ENCODE measurements at regions of chrX and their contacts with region 1.

Region 1: DNA sequence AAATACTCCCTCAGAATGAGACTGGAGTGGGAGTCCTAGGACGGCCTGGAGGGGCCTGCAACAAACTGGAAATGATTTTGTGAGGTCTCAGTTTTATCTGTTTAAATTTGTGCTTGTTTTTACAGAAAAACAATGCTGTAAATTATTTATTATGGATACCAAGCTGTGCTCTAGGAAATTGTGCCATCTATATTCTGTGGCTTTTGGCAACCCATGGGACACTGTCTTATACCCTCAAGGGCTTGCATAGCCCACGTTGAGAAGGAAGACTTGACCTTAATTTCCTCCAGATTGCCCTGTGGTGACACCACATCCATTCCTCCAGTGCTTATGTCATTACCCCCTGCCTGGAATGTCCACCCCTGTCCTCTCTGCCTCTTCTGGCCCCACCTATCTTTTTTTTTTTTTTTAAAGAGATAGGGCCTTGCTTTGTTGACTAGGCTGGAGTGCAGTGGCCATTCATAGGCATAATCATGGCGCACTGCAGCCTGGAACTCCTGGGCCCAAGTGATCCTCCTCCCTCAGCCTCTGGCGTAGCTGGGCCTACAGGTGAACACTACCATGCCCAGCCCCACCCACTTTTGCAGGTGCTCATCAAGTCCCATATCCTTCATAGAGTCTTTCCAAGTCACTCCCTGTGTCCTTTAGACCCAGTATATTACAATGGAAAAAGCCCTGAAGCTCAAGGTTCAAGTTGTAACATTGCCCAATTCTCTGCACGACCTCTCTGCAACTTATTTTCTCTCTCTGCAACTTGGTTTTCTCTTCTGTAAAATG is 77.4 kb downstream of the HPRT1 start:
- DNase-seq: no peak
- ATAC-seq: peak; percentile 72
- H3K4me3 ChIP-seq: no peak overlapping the region
- H3K27ac ChIP-seq: peak overlapping the region; percentile 57
- H3K4me1 ChIP-seq: peaks cover 15% of the 10 kb centered on the region
- H3K27me3 ChIP-seq: no peaks in the 10 kb centered on the region
- CTCF ChIP-seq: no peak

Region 2: GRCh38 chrX:134761841-134762240 is 224.5 kb after region 1 on chrX:
- CTCF ChIA-PET with region 1: interaction called, 13 read pairs
- POLR2A ChIA-PET with region 1: no interaction called
- in situ Hi-C with region 1: no loop called
- intact Hi-C with region 1: no loop called
- DNase-seq: no peak
- ATAC-seq: 0 out of 2 replicates have a peak, but pooled peaks have one; percentile 50
- H3K4me3 ChIP-seq: no peak overlapping the region
- H3K27ac ChIP-seq: no peak overlapping the region
- H3K4me1 ChIP-seq: no peaks in the 10 kb centered on the region
- H3K27me3 ChIP-seq: no peaks in the 10 kb centered on the region
- CTCF ChIP-seq: peak; percentile 71

Measured in Panc1 (cell line).